CD8-positive, alpha-beta T cell (primary cell): ENCODE measurements at regions of chr16 and their contacts with region 1.

Region 1: DNA sequence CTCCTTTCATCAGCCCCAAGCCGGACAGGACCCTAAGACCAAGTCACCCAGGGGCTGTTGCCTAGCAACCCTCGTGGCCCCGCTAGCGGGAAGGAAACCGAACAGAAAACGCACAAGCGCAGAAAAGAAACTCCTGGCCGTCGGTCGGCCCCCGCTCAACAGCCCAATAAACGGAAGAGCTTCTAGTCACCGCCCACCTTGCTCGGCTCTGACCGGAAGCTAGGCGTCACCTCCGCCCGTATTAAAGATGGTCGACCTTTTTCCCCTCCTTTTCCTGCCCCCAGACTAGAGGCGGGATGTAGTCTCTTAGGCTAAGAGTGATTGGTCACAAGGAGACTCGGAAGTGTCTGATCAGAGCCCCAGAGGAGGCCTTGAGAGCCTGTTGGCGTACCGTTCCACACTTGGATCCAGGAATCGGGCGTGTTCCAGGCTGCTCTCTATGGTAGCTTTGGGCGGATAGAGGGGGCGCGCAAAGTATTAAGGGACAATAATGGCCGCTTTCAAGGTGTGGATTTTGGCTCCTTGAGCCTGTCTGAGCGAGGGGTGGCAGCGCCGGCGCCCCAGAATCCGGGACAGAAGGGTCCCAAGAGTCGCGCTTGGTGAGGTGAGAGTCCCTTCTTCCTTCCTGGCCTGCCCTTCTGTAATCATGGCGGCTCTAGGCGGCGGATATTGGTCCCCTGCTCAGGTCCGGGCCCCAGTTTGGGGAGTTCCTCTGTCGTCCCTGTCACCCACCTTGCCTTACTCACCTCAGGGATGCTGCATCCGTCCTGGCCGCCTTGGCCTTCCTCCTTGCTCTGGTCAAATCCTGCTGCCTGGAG is at the starts of genes DHX38 and TXNL4B:
- DNase-seq: peak; percentile 83 to 98 (median 91)
- ATAC-seq: peak; percentile 95
- H3K4me3 ChIP-seq: peak within 1 kb of the TSS; percentile 89 to 97
- H3K4me3 Mint-ChIP-seq: peak within 1 kb of the TSS; percentile 98
- H3K27ac ChIP-seq: peak within 1 kb of the TSS; percentile 87 to 98
- H3K27ac Mint-ChIP-seq: peak within 1 kb of the TSS; percentile 98
- H3K4me1 ChIP-seq: peaks cover 32% of the 10 kb centered on the region
- H3K4me1 Mint-ChIP-seq: peaks cover 46% of the 10 kb centered on the region
- H3K27me3 ChIP-seq: no peaks in the 10 kb centered on the region
- H3K27me3 Mint-ChIP-seq: no peaks in the 10 kb centered on the region
- CTCF ChIP-seq: no peak
- total RNA-seq, gene DHX38: 122 to 126 TPM
- total RNA-seq, gene TXNL4B: 16.7 to 18.3 TPM

Region 2: DNA sequence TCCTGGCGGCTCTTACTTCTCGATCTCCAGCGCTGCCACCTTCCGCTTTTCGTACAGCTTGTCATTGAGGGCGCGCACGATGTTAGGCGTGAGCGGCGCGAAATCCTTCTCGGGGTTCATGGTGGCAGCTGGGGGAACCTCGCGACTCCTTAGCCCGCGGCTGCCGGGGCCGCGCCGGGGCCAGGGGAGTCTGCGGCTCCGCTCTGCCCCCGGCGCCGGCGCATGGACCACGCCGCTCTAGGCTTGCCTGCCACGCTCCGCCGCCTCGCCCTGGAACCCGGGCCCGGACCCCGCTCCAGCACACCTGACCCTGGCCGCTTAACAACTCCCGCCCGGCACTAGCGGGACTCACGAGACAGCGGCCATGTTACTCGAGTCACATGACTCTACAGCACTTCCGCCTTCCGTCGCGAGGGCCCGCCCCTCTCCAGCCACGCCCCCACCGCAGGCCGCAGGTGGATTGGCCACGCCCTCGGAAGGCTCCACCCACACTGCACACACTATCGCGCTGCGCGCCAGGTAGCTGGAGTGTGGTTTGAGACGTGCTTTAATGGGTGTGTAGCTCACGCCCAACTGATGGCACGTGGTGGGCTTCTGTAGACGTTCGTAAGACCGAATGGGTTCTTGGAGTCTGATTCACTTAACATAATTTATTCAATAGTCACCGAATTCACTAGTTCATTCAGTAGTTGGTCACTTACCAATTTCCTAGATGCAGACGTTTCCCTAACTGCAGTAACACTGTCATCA is 1292.7 kb before region 1 on chr16 and contains the start of gene VAC14:
- CTCF ChIA-PET with region 1: no interaction called
- POLR2A ChIA-PET with region 1: interaction called, 4 read pairs
- intact Hi-C with region 1: loop called in 1 of 2 experiments (anchors 10 kb)
- DNase-seq: peak; percentile 95 to 99 (median 97)
- ATAC-seq: peak; percentile 99
- H3K4me3 ChIP-seq: peak within 1 kb of the TSS; percentile 63 to 65
- H3K4me3 Mint-ChIP-seq: peak within 1 kb of the TSS; percentile 95
- H3K27ac ChIP-seq: peak within 1 kb of the TSS; percentile 52 to 57
- H3K27ac Mint-ChIP-seq: peak within 1 kb of the TSS; percentile 97
- H3K4me1 ChIP-seq: peaks cover 12% of the 10 kb centered on the region
- H3K4me1 Mint-ChIP-seq: peaks cover 39% of the 10 kb centered on the region
- H3K27me3 ChIP-seq: no peaks in the 10 kb centered on the region
- H3K27me3 Mint-ChIP-seq: no peaks in the 10 kb centered on the region
- CTCF ChIP-seq: no peak
- total RNA-seq, gene VAC14: 27.1 to 27.2 TPM

Region 3: DNA sequence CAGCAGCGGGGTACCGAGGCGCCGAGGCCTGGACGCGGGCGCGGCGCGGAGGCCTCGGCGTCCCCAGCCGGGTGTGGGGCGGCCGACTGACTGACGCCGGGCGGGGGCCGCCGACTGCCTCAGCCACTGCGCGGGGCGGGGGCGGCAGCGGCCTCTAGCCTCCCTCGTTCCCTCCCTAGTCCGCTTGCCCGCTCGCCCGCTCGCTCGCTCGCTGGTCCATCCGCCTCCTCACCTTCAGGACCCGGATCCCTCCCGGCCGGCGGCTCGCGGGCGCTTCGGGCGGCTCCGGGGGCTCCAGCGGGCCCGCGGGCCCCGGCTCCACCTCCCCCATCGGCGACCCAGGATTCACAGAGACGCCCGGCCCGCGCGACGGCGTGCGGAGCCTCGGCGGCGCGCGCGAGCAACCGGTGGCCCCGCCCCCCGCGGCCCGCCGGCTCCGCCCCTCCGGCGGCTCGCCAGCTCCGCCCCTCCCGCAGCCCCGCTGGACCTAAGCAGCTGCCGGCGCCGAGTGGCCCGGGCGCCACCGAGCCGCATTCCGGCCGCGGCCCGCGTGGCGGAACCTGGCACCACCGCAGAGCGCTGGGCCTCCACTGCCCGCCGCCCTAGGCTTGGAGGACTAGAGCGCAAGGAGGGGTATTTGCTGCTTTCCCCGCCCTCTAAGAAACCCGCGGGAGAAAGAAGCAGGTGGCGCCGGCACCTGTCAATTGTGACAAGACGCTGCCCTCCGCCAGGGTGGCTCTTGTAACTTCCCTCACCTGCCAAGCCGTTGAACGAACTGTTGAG is 369.9 kb before region 1 on chr16:
- CTCF ChIA-PET with region 1: no interaction called
- POLR2A ChIA-PET with region 1: no interaction called
- intact Hi-C with region 1: loop called (anchors 10 kb)
- DNase-seq: peak; percentile 61 to 90 (median 79)
- ATAC-seq: peak; percentile 82
- H3K4me3 ChIP-seq: peak overlapping the region; percentile 48 to 73
- H3K4me3 Mint-ChIP-seq: peak overlapping the region; percentile 79
- H3K27ac ChIP-seq: peak overlapping the region in 1 of 2 experiments; percentile 69
- H3K27ac Mint-ChIP-seq: peak overlapping the region; percentile 67
- H3K4me1 ChIP-seq: peaks cover 14% of the 10 kb centered on the region
- H3K4me1 Mint-ChIP-seq: peaks cover 15% of the 10 kb centered on the region
- H3K27me3 ChIP-seq: no peaks in the 10 kb centered on the region
- H3K27me3 Mint-ChIP-seq: no peaks in the 10 kb centered on the region
- CTCF ChIP-seq: no peak

Region 4: GRCh38 chr16:71894921-71895678 is 198.6 kb before region 1 on chr16 and contains the start of gene IST1:
- CTCF ChIA-PET with region 1: no interaction called
- POLR2A ChIA-PET with region 1: no interaction called
- intact Hi-C with region 1: loop called in 1 of 2 experiments (anchors 1 kb)
- DNase-seq: peak; percentile 95 to 99 (median 98)
- ATAC-seq: peak; percentile 94
- H3K4me3 ChIP-seq: peak within 1 kb of the TSS; percentile 98 to 99
- H3K4me3 Mint-ChIP-seq: peak within 1 kb of the TSS; percentile 97
- H3K27ac ChIP-seq: peak within 1 kb of the TSS; percentile 97
- H3K27ac Mint-ChIP-seq: peak within 1 kb of the TSS; percentile 97
- H3K4me1 ChIP-seq: peaks cover 34% of the 10 kb centered on the region
- H3K4me1 Mint-ChIP-seq: peaks cover 32% of the 10 kb centered on the region
- H3K27me3 ChIP-seq: no peaks in the 10 kb centered on the region
- H3K27me3 Mint-ChIP-seq: no peaks in the 10 kb centered on the region
- CTCF ChIP-seq: no peak
- total RNA-seq, gene IST1: 460 to 476 TPM

Region 5: DNA sequence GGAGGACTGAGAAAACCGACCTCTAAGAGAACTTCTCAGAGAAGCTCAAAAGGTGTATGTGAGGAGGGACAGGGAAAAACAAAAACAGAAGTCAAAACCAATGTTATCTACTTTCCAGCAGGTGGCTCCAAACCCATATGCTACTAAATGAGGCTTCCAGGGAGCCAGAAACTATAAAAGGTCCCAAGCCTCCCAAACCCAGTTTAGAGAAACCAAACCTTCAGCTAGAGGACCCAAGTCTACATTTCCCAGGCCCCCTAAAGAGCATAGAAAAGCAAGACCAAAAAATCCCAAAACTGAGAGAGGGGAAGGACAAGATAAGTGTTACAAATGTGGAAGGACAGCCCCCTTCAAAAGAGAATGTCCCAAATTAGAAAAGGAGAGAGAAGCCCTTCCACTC is 26.9 kb before region 1 on chr16:
- CTCF ChIA-PET with region 1: interaction called, 10 read pairs
- POLR2A ChIA-PET with region 1: no interaction called
- intact Hi-C with region 1: no loop called
- DNase-seq: peak in 2 of 9 experiments; percentile 31 to 53
- ATAC-seq: peak; percentile 46
- H3K4me3 ChIP-seq: no peak overlapping the region
- H3K4me3 Mint-ChIP-seq: no peak overlapping the region
- H3K27ac ChIP-seq: no peak overlapping the region
- H3K27ac Mint-ChIP-seq: no peak overlapping the region
- H3K4me1 ChIP-seq: no peaks in the 10 kb centered on the region
- H3K4me1 Mint-ChIP-seq: no peaks in the 10 kb centered on the region
- H3K27me3 ChIP-seq: no peaks in the 10 kb centered on the region
- H3K27me3 Mint-ChIP-seq: no peaks in the 10 kb centered on the region
- CTCF ChIP-seq: peak; percentile 55